ENCODE measurements at regions of chr1 and their contacts with region 1.

Region 1: DNA sequence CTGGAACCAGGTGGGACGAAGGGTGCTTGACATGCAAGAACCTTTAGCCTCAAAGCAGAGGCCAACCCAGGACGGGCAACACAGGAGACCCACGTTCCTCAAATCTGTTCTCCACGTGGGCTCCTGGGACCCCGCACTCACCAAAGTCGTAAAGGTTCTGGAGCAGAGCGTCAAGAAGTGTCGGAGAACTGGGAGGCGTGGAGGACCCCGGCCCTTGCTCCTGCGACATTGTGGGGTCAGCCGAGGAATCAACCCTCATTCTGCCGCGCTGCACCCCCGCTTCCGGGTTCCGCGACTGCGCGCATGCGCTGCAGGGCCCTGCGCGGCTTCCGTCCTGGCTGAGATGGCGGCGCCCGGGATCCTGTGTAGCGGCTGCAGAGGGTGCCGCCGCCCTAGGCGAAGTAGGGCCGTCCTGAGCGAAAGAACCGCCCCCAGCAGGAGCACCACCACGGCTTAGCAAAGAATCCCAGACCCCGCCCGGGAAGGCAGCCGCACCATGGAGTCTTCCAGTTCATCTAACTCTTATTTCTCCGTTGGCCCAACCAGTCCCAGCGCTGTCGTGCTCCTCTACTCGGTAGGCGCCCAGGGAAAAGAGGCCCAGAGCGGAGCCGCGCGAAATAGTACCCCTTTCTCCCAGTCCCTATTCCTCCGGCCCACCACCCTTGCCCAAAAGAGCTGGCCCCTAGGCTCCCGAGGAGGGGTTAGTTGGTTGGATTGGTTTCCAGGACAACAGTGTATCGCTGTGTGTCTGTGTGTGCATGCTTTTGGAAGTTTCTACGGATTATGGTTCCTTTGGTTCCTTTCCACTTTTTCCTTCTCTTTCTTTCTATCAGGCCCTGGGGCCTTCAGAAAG is at the start of gene GNPAT:
- DNase-seq: peak; percentile 83 to 95 (median 90)
- ATAC-seq: peak; percentile 95
- H3K4me3 ChIP-seq: peak within 1 kb of the TSS; percentile 93
- H3K4me3 Mint-ChIP-seq: peak within 1 kb of the TSS; percentile 98
- H3K27ac ChIP-seq: peak within 1 kb of the TSS; percentile 67 to 77
- H3K27ac Mint-ChIP-seq: peak within 1 kb of the TSS; percentile 87
- H3K4me1 ChIP-seq: peaks cover 30% of the 10 kb centered on the region
- H3K4me1 Mint-ChIP-seq: peaks cover 83% of the 10 kb centered on the region
- H3K27me3 ChIP-seq: no peaks in the 10 kb centered on the region
- H3K27me3 Mint-ChIP-seq: no peaks in the 10 kb centered on the region
- CTCF ChIP-seq: no peak
- total RNA-seq, gene GNPAT: 11.8 to 12.8 TPM

Region 2: DNA sequence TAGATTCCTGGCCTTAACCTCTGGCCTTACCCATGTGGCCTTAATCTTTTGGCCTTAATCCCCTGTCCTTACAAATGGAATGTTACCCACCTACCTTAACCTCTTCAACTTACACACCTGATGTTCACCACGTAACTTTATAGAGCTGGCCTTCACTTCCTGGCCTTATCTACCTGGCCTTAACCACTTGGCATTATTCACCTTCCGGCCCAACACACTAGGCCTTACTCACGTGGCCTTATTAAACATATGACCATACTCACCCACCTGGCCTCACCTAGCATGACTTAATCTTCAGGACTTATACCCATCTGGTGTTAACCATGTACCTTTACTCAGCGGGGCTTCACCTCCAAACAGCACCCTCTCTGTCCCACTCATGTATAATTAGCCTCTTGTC is 54.8 kb after region 1 on chr1:
- CTCF ChIA-PET with region 1: no interaction called
- POLR2A ChIA-PET with region 1: no interaction called
- intact Hi-C with region 1: loop called in 1 of 2 experiments (anchors 1 kb)
- DNase-seq: no peak
- ATAC-seq: no peak
- H3K4me3 ChIP-seq: no peak overlapping the region
- H3K4me3 Mint-ChIP-seq: no peak overlapping the region
- H3K27ac ChIP-seq: no peak overlapping the region
- H3K27ac Mint-ChIP-seq: no peak overlapping the region
- H3K4me1 ChIP-seq: no peaks in the 10 kb centered on the region
- H3K4me1 Mint-ChIP-seq: no peaks in the 10 kb centered on the region
- H3K27me3 ChIP-seq: no peaks in the 10 kb centered on the region
- H3K27me3 Mint-ChIP-seq: no peaks in the 10 kb centered on the region
- CTCF ChIP-seq: no peak

Region 3: GRCh38 chr1:231390071-231390470 is 149.0 kb after region 1 on chr1:
- CTCF ChIA-PET with region 1: no interaction called
- POLR2A ChIA-PET with region 1: no interaction called
- intact Hi-C with region 1: no loop called
- DNase-seq: peak in 1 of 14 experiments; percentile 16
- ATAC-seq: no peak
- H3K4me3 ChIP-seq: no peak overlapping the region
- H3K4me3 Mint-ChIP-seq: no peak overlapping the region
- H3K27ac ChIP-seq: no peak overlapping the region
- H3K27ac Mint-ChIP-seq: peak overlapping the region; percentile 40
- H3K4me1 ChIP-seq: peaks cover 4% of the 10 kb centered on the region
- H3K4me1 Mint-ChIP-seq: peaks cover 69% of the 10 kb centered on the region
- H3K27me3 ChIP-seq: no peaks in the 10 kb centered on the region
- H3K27me3 Mint-ChIP-seq: no peaks in the 10 kb centered on the region
- CTCF ChIP-seq: no peak

Region 4: DNA sequence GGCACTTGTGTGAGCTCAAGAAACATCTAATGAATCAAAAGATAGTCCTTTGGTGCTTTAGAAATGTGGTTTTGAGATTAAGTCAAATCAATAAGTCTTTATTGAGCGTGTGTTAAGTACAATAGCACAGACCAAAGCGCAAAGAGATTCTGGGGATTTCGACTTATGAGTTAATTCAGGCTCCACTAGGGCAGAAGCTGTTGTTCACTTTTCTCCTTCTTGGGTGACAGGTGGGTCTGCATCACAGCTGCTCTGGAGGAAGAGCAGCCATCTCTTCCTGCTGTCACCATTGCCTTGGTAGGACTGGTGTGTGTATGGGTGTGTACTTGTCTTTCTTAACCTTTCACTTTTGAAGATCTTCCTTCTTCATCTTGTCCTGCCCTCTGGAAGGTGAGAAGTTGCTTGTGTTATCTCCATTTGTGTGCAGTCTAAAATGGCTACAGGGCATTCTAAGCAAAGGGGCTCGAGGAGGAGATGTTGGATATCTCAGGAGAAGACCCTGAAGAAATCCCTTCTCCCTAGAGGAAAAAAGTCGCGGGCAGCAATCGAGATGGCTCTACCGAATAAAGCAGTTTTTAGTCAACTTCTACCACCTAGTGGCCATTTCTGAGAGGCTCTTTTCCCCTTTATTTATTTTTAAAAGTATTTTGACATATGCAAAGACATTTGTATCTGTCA is 362.6 kb after region 1 on chr1:
- CTCF ChIA-PET with region 1: no interaction called
- POLR2A ChIA-PET with region 1: no interaction called
- intact Hi-C with region 1: loop called in 1 of 2 experiments (anchors 5 kb)
- DNase-seq: peak in 10 of 14 experiments; percentile 3 to 75 (median 34)
- ATAC-seq: peak; percentile 93
- H3K4me3 ChIP-seq: peak overlapping the region; percentile 57
- H3K4me3 Mint-ChIP-seq: peak overlapping the region; percentile 91
- H3K27ac ChIP-seq: peak overlapping the region in 1 of 2 donors; percentile 2
- H3K27ac Mint-ChIP-seq: peak overlapping the region; percentile 68
- H3K4me1 ChIP-seq: peaks cover 4% of the 10 kb centered on the region
- H3K4me1 Mint-ChIP-seq: peaks cover 10% of the 10 kb centered on the region
- H3K27me3 ChIP-seq: no peaks in the 10 kb centered on the region
- H3K27me3 Mint-ChIP-seq: no peaks in the 10 kb centered on the region
- CTCF ChIP-seq: peak; percentile 84

Measured in CD4-positive, alpha-beta T cell (primary cell).